Activated naive CD8-positive, alpha-beta T cell treated with anti-CD3 and anti-CD28 coated beads, Interleukin-2, amount 10 ng/mL, durations not matched to agents 7 days and 5 days (primary cell): ENCODE measurements at regions of chr4 and their contacts with region 1.

Region 1: GRCh38 chr4:168480931-168481611 is 779 bp upstream of the DDX60L start:
- DNase-seq: no peak
- ATAC-seq: peak; percentile 69
- H3K4me3 Mint-ChIP-seq: peak overlapping the region; percentile 97
- H3K27ac Mint-ChIP-seq: peak overlapping the region; percentile 99
- H3K4me1 Mint-ChIP-seq: peaks cover 60% of the 10 kb centered on the region
- H3K27me3 Mint-ChIP-seq: no peaks in the 10 kb centered on the region

Region 2: DNA sequence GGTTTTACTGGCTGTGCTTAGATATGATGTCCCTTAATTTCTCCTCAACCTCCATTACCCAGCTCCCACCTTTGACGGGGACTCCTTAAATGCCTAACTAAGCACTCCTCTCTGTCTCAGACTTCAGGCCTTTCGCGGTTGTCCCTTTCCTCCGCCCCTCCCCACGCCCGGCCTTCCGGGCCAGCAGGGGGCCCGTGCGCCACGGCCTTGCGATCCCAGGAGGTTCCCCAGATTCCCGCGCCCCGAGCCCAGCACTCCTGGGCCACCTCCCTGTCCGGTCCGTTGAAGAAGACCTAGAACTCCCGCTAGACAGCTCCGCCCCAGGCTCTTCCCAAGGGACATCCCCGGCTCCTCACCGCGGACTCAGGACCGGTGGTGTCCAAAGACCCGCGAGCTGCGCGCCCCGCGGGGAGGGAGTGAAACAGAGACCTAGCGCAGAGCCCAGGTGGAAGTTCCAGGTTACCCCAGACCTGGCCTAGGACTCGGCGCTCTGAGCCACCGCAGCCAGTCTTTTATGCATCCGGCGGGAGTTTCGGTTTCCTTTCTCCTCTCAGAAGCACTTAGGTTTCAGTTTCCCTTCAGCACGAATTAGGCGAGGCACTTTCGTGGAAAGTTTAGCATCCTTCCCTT is 162.7 kb before region 1 on chr4 and contains the start of gene DDX60:
- POLR2A ChIA-PET with region 1: interaction called, 37 read pairs
- DNase-seq: peak; percentile 84
- ATAC-seq: peak; percentile 94
- H3K4me3 Mint-ChIP-seq: peak within 1 kb of the TSS; percentile 95
- H3K27ac Mint-ChIP-seq: peak within 1 kb of the TSS; percentile 89
- H3K4me1 Mint-ChIP-seq: peaks cover 57% of the 10 kb centered on the region
- H3K27me3 Mint-ChIP-seq: no peaks in the 10 kb centered on the region
- total RNA-seq, gene DDX60: 137 to 141 TPM

Region 3: DNA sequence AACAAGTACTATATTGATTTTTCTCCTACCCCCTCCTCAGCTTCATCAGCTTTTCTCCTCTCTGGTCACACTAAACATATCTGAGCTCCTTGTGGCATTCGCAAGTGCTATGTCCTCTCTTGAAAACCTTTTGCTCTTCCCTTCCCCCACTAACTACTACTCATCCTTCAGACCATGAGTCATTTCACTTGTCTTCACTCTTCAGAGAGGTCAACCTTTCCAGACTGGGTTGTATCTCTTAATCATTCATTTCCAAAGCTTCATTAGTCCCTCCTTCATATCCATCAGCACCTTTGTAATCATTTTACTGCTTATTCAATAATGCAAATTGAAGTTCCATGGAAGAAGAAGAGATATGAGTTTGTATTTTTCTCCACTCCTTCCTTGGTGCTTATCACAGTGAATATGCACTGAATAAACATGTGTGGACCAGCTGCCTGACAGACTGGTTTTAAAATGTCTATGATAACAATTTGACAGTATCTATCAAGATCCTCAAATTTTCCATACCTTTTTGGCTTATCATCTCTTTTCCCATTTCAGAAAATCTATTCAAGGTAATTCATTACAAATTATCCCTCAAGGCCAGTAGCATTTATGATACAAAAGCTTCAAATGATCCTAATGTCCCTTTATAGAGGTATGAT is 29.2 kb before region 1 on chr4:
- POLR2A ChIA-PET with region 1: interaction called, 12 read pairs
- DNase-seq: no peak
- ATAC-seq: peak; percentile 65
- H3K4me3 Mint-ChIP-seq: no peak overlapping the region
- H3K27ac Mint-ChIP-seq: peak overlapping the region; percentile 47
- H3K4me1 Mint-ChIP-seq: peaks cover 23% of the 10 kb centered on the region
- H3K27me3 Mint-ChIP-seq: no peaks in the 10 kb centered on the region

Region 4: GRCh38 chr4:168503652-168504362 is 22.7 kb after region 1 on chr4:
- POLR2A ChIA-PET with region 1: interaction called, 17 read pairs
- DNase-seq: no peak
- ATAC-seq: peak; percentile 36
- H3K4me3 Mint-ChIP-seq: peak overlapping the region; percentile 4
- H3K27ac Mint-ChIP-seq: no peak overlapping the region
- H3K4me1 Mint-ChIP-seq: peaks cover 16% of the 10 kb centered on the region
- H3K27me3 Mint-ChIP-seq: peaks cover 14% of the 10 kb centered on the region

Region 5: DNA sequence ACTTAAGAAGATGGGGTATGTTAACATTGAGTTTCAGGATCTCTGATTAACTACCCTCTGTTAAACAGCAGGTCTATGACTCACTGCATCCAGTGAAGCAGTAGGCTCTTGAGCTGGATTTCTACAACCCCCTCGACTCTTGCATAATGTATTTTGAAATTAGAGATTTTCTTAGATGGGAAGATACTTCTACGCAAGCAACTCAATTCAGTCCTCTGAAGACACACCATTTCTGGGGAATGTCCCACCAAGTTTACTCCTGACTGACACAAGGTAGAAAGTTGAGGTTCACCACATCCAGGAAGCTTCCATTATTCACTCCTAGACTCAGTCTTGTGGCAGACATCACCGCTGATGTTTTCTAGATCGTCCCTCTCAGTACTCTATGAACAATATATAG is 28.7 kb after region 1 on chr4:
- POLR2A ChIA-PET with region 1: interaction called, 17 read pairs
- DNase-seq: no peak
- ATAC-seq: peak; percentile 82
- H3K4me3 Mint-ChIP-seq: peak overlapping the region; percentile 54
- H3K27ac Mint-ChIP-seq: peak overlapping the region; percentile 66
- H3K4me1 Mint-ChIP-seq: peaks cover 33% of the 10 kb centered on the region
- H3K27me3 Mint-ChIP-seq: no peaks in the 10 kb centered on the region